ENCODE measurements at regions of chr2 and their contacts with region 1.

Region 1: DNA sequence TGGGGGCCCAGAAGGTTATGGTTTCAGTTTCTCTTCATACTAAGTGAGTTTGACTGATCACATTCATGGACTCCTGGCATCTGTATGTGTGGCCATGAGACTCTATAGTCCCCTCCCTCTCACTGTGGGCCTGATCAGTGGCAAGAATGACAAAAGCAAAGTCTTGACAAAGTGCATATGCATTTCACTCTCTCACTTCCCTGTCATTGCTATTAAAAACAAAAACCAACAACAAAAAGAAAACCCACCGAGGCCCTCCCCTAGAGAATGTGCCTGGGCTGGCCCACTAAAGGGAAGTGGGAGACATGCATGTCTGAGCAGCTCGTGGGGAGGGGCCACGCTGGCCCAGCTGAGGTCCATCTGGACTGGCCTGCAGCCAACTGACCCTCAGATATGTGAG is 600.1 kb upstream of the RAB6C start:
- DNase-seq: no peak
- H3K4me3 ChIP-seq: no peak overlapping the region
- H3K27ac ChIP-seq: no peak overlapping the region
- H3K4me1 ChIP-seq: peaks cover 0 to 2% of the 10 kb centered on the region in 2 experiments; a peak in 2 of 4 replicates
- H3K27me3 ChIP-seq: no peaks in the 10 kb centered on the region
- CTCF ChIP-seq: no peak
- EP300 ChIP-seq: no peak
- RAD21 ChIP-seq: no peak

Region 2: DNA sequence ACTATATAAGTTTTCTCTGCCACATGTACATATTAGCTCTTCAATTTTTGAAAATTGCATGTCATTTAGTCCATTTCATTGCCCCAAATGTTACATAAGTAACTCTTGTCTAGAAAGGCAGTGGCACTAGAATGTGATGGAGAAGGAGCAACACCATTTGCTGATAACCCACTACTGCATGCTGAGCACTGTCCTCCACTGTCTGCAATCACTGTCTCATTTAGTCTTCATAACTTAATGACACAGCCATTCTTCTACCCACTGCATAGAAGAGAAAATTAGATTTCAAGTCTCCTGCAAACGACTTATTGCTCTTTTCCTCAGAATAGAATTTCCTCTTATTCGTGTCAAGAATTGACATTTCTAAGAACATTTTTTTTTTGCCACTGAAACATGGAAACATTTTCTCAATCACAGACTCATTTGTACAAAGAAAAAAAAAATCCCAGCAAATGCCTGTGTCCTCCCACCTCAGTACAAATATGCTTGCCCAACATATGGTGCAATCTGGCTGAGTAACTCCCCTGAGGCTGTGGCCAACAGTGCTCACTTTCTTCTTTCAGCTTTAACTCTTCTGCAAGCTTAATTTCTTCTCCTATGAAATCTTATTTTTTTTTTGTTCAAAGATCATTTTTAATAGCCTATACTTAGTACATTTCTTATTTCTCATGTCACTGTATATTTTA is 292.1 kb before region 1 on chr2:
- CTCF ChIA-PET with region 1: no interaction called
- POLR2A ChIA-PET with region 1: no interaction called
- DNase-seq: no peak
- H3K4me3 ChIP-seq: no peak overlapping the region
- H3K27ac ChIP-seq: no peak overlapping the region
- H3K4me1 ChIP-seq: no peaks in the 10 kb centered on the region
- H3K27me3 ChIP-seq: no peaks in the 10 kb centered on the region
- CTCF ChIP-seq: no peak
- EP300 ChIP-seq: no peak
- RAD21 ChIP-seq: no peak

Region 3: DNA sequence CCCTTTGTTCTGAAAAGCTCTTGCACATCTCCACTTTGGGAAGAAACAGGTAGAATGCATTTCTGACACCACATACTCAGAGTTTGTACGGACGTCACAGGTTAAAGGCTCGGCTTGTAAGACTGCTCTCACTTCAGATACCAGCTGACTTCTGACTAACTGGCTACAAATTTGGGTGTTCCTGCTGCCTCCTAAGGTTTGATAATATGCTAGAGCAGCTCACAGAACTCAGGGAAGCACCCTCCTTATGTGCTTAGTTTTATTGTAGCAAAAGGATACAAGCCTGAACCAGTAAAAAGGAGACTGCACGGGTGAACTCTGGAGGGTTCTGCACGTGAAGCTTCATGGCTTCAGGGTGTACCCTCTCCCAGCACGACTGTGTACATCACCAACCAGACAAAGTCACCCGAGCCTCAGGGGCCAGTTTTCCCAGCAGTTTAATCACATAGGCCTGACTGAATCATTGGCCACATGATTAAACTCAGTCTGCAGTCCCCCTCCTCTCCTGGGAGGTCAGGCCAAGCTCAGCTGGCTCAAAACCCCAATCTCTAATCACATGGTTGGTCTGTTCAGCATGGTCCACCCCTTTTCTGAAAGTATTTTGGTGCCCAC is 149.5 kb before region 1 on chr2:
- CTCF ChIA-PET with region 1: no interaction called
- POLR2A ChIA-PET with region 1: no interaction called
- DNase-seq: no peak
- H3K4me3 ChIP-seq: no peak overlapping the region; a peak in 1 of 4 replicates
- H3K27ac ChIP-seq: no peak overlapping the region
- H3K4me1 ChIP-seq: no peaks in the 10 kb centered on the region
- H3K27me3 ChIP-seq: no peaks in the 10 kb centered on the region
- CTCF ChIP-seq: no peak
- EP300 ChIP-seq: no peak
- RAD21 ChIP-seq: no peak

Region 4: DNA sequence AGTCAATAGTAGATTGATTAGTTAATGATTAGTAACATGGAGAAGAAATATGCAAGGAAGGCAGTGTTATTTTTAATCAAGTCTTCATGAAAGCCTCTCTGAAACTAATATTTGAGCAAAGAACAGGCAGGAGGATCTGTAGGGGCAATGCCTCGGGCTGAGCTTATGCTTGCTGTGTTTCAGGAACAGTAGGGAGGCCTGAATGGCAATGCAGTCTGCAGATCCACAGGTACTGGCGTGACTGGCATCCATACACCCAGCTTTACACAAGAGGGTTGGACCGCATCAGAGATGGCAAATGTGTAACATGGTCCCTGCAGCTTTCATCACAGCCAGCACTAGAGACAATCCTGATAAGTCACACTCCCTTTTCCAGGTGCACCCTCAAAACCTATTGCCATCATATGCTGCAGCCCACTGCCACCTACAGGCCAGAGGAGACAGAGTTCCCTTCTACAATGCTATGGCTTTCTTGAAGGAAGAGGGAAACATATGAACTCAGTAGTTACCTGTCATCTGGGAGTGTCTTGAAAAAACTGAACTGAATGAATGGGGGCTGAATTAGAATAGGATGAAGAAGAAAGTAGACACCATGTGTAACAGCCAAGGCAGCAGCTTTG is 17.7 kb after region 1 on chr2:
- CTCF ChIA-PET with region 1: interaction called, 12 read pairs
- POLR2A ChIA-PET with region 1: no interaction called
- DNase-seq: peak; percentile 43
- H3K4me3 ChIP-seq: no peak overlapping the region; a peak in 1 of 4 replicates
- H3K27ac ChIP-seq: no peak overlapping the region
- H3K4me1 ChIP-seq: peaks cover 0 to 4% of the 10 kb centered on the region in 2 experiments; a peak in 1 of 4 replicates
- H3K27me3 ChIP-seq: no peaks in the 10 kb centered on the region
- CTCF ChIP-seq: peak; percentile 28
- EP300 ChIP-seq: no peak
- RAD21 ChIP-seq: peak; percentile 83

Region 5: GRCh38 chr2:129605646-129606045 is 226.2 kb after region 1 on chr2:
- CTCF ChIA-PET with region 1: no interaction called
- POLR2A ChIA-PET with region 1: no interaction called
- DNase-seq: peak; percentile 42
- H3K4me3 ChIP-seq: no peak overlapping the region
- H3K27ac ChIP-seq: no peak overlapping the region
- H3K4me1 ChIP-seq: peaks cover 0 to 2% of the 10 kb centered on the region in 2 experiments; a peak in 2 of 4 replicates
- H3K27me3 ChIP-seq: no peaks in the 10 kb centered on the region
- CTCF ChIP-seq: no peak
- EP300 ChIP-seq: no peak
- RAD21 ChIP-seq: no peak